ENCODE measurements at regions of chr11 and their contacts with region 1.

Region 1: GRCh38 chr11:8033305-8034105 is 46.4 kb downstream of the EIF3F start:
- DNase-seq: peak; percentile 78
- ATAC-seq: peak; percentile 92
- H3K4me3 Mint-ChIP-seq: peak overlapping the region; percentile 51
- H3K27ac Mint-ChIP-seq: no peak overlapping the region
- H3K4me1 Mint-ChIP-seq: peaks cover 15% of the 10 kb centered on the region
- H3K27me3 Mint-ChIP-seq: peaks cover 10% of the 10 kb centered on the region
- CTCF ChIP-seq: peak; percentile 29; the same call in 1 of the 2 replicates

Region 2: GRCh38 chr11:8018484-8019313 is 14.8 kb before region 1 on chr11:
- CTCF ChIA-PET with region 1: interaction called, 40 read pairs
- POLR2A ChIA-PET with region 1: no interaction called
- DNase-seq: peak; percentile 74
- ATAC-seq: peak; percentile 59
- H3K4me3 Mint-ChIP-seq: peak overlapping the region; percentile 75
- H3K27ac Mint-ChIP-seq: no peak overlapping the region
- H3K4me1 Mint-ChIP-seq: peaks cover 32% of the 10 kb centered on the region
- H3K27me3 Mint-ChIP-seq: peaks cover 81% of the 10 kb centered on the region
- CTCF ChIP-seq: no peak

Region 3: GRCh38 chr11:8043756-8044155 is 10.3 kb after region 1 on chr11:
- CTCF ChIA-PET with region 1: interaction called, 12 read pairs
- POLR2A ChIA-PET with region 1: no interaction called
- DNase-seq: no peak
- ATAC-seq: no peak
- H3K4me3 Mint-ChIP-seq: no peak overlapping the region
- H3K27ac Mint-ChIP-seq: no peak overlapping the region
- H3K4me1 Mint-ChIP-seq: no peaks in the 10 kb centered on the region
- H3K27me3 Mint-ChIP-seq: peaks cover 10% of the 10 kb centered on the region
- CTCF ChIP-seq: no peak

Region 4: DNA sequence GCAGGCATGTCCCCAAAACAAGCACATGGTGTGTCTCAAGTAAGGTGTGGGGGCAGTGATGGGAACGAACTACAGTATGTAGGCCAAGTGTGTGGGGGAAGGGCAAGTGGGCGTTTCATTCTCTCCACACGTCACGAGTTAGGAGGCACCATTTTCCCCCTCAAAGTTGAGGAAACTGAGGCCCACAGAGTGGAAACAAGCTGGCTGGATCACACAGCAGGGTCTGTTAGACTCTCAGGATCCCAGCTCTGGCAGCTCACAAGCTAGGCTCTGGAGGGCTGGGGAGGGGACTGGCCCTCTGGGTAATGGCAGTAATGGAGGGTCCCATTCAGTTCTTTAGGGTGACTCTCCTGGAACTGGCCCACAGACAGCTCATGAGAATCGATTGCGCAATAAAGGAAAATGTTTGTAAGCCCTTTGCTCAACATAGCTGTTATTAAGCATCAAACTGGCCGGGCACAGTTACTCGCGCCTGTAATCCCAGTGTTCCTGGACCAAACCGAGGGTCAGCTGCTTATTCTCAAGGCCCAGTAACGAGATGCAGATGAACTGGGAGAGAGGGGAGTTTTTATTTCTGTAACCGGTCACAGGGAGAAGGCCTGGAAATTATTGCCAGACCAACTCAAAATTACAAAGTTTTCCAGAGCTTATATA is 23.4 kb after region 1 on chr11:
- CTCF ChIA-PET with region 1: interaction called, 25 read pairs
- POLR2A ChIA-PET with region 1: no interaction called
- DNase-seq: no peak
- ATAC-seq: no peak
- H3K4me3 Mint-ChIP-seq: no peak overlapping the region
- H3K27ac Mint-ChIP-seq: peak overlapping the region; percentile 37; the same call in 1 of the 2 replicates
- H3K4me1 Mint-ChIP-seq: peaks cover 14% of the 10 kb centered on the region
- H3K27me3 Mint-ChIP-seq: no peaks in the 10 kb centered on the region
- CTCF ChIP-seq: no peak

Region 5: GRCh38 chr11:8070417-8071115 is 37.1 kb after region 1 on chr11:
- CTCF ChIA-PET with region 1: interaction called, 25 read pairs
- POLR2A ChIA-PET with region 1: no interaction called
- DNase-seq: no peak
- ATAC-seq: peak; percentile 40
- H3K4me3 Mint-ChIP-seq: no peak overlapping the region
- H3K27ac Mint-ChIP-seq: no peak overlapping the region
- H3K4me1 Mint-ChIP-seq: peaks cover 48% of the 10 kb centered on the region
- H3K27me3 Mint-ChIP-seq: peaks cover 12% of the 10 kb centered on the region; the same call in 1 of the 2 replicates
- CTCF ChIP-seq: no peak

Region 6: GRCh38 chr11:8080674-8081590 is 47.4 kb after region 1 on chr11 and contains the start of gene TUB:
- CTCF ChIA-PET with region 1: interaction called, 278 read pairs
- POLR2A ChIA-PET with region 1: no interaction called
- DNase-seq: peak; percentile 70
- ATAC-seq: peak; percentile 44
- H3K4me3 Mint-ChIP-seq: peak within 1 kb of the TSS; percentile 79
- H3K27ac Mint-ChIP-seq: no peak within 1 kb of the TSS
- H3K4me1 Mint-ChIP-seq: peaks cover 48% of the 10 kb centered on the region
- H3K27me3 Mint-ChIP-seq: peaks cover 42% of the 10 kb centered on the region
- CTCF ChIP-seq: no peak
- total RNA-seq, gene TUB: 29.2 to 32.1 TPM (median 30.0 TPM) in 3 replicates